ENCODE measurements at regions of chr12 and their contacts with region 1.

Region 1: DNA sequence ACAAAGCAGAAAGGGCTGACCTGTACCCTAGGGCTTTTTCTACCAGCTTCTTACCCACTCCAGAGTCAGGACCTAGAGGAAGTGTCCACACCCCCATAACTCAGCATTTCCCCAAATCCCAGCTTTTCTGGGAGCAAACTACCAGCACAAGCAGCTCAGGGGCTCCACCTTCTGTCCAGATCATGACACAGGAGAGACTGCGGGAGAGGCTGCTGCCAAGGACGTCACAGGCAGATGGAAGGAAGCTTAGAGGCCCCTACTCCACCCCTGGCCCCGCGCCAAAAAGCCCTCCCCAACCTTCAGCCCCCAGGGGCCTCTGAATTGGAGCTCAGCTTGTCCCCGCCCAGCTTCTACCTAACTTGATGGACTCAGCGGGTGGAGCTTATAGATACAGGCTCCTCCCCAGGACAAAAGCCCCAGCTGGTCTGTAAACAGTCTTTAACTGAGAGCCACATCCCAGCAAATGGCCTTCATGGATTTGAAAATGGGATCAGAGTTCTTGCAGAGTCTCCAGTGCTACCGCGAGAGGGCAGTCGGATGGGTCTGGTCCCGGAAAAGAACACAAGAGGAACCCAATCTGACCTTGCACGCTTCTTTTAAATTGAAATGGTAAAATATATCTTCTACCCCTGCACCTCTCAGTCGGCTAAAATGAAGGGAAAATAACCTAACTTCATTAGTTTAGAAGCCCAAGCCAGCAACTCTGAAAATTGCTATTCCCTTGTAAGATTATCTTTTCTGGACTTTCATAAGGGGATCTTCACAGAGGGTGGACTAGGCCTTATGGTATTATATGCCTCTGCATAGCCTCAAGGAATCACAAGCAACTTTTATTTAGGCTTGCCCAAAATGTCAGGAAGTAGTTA is 6.8 kb upstream of the BAZ2A start:
- DNase-seq: peak; percentile 97
- H3K4me3 Mint-ChIP-seq: peak overlapping the region; percentile 86
- H3K27ac Mint-ChIP-seq: peak overlapping the region; percentile 91
- H3K4me1 Mint-ChIP-seq: peaks cover 62% of the 10 kb centered on the region
- H3K27me3 Mint-ChIP-seq: no peaks in the 10 kb centered on the region

Region 2: GRCh38 chr12:56391721-56392120 is 245.2 kb before region 1 on chr12:
- CTCF ChIA-PET with region 1: no interaction called
- intact Hi-C with region 1: no loop called
- DNase-seq: no peak
- H3K4me3 Mint-ChIP-seq: no peak overlapping the region
- H3K27ac Mint-ChIP-seq: no peak overlapping the region
- H3K4me1 Mint-ChIP-seq: no peaks in the 10 kb centered on the region
- H3K27me3 Mint-ChIP-seq: no peaks in the 10 kb centered on the region

Region 3: DNA sequence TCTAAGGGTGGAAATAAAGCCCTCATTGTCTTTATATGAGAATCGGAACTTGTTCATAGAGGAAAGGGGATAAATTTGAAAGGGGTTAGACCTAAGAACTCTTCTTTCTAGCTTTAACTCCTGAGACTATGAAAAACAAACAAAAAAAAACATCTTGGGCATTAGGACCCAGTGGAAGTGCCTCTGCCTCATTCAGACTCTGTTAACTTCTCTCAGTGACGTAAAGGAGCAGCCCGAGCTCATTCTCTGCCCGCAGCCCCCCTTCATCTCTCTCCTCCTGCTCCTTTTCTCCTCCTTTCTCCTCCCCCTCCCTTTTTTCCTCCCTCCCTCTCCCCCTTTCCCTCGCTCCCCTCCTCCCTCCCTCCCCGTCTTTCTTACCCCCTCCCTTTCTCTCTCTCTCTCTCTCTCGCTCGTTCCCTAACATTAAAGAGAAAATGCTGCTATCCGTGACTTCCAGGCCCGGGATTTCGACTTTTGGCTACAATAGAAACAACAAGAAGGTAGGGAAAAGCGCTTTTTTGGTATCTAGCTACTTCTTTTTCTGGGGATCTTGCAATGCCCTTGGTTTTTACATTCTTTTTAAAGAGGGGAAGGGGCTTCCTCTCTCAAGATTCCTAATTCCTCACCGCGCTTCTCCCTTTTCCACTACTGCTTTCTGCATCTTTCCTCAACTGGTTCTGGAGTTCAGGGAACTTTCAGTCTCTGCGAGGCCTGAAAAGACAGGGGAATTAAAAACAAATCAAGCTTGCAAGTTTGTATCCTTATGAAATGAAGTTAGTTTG is 115.1 kb before region 1 on chr12 and contains the start of gene RBMS2:
- CTCF ChIA-PET with region 1: interaction called, 4 read pairs
- intact Hi-C with region 1: loop called (anchors 2 kb)
- DNase-seq: peak; percentile 56
- H3K4me3 Mint-ChIP-seq: peak within 1 kb of the TSS; percentile 62
- H3K27ac Mint-ChIP-seq: no peak within 1 kb of the TSS
- H3K4me1 Mint-ChIP-seq: peaks cover 28% of the 10 kb centered on the region
- H3K27me3 Mint-ChIP-seq: no peaks in the 10 kb centered on the region
- total RNA-seq, gene RBMS2: 2.5 to 5.1 TPM

Region 4: DNA sequence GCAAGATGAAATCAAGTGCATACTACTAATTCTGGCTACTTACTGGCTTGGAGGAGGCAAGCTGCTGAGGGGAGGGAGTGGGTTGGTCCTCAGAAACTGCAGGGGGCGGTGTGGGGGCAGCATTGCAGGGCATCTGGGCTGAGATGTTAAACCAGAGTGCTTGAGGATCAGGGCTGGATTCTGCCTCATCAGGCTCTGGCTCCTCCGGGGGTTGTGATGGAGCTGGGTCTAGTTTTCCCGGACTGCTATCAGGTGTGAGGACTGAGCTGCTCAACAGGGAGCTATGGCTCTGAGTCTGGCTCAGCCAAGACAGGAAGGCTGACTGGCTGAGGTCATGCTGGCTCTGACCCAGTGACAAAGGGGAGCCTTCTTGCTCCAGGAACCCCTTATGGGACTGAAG is 35.4 kb before region 1 on chr12:
- CTCF ChIA-PET with region 1: interaction called, 21 read pairs
- intact Hi-C with region 1: loop called (anchors 1 kb)
- DNase-seq: peak; percentile 62
- H3K4me3 Mint-ChIP-seq: no peak overlapping the region
- H3K27ac Mint-ChIP-seq: no peak overlapping the region
- H3K4me1 Mint-ChIP-seq: no peaks in the 10 kb centered on the region
- H3K27me3 Mint-ChIP-seq: no peaks in the 10 kb centered on the region

Region 5: GRCh38 chr12:56622535-56622934 is 14.4 kb before region 1 on chr12:
- CTCF ChIA-PET with region 1: interaction called, 27 read pairs
- intact Hi-C with region 1: no loop called
- DNase-seq: peak; percentile 27
- H3K4me3 Mint-ChIP-seq: no peak overlapping the region
- H3K27ac Mint-ChIP-seq: no peak overlapping the region
- H3K4me1 Mint-ChIP-seq: peaks cover 55% of the 10 kb centered on the region
- H3K27me3 Mint-ChIP-seq: no peaks in the 10 kb centered on the region

Region 6: DNA sequence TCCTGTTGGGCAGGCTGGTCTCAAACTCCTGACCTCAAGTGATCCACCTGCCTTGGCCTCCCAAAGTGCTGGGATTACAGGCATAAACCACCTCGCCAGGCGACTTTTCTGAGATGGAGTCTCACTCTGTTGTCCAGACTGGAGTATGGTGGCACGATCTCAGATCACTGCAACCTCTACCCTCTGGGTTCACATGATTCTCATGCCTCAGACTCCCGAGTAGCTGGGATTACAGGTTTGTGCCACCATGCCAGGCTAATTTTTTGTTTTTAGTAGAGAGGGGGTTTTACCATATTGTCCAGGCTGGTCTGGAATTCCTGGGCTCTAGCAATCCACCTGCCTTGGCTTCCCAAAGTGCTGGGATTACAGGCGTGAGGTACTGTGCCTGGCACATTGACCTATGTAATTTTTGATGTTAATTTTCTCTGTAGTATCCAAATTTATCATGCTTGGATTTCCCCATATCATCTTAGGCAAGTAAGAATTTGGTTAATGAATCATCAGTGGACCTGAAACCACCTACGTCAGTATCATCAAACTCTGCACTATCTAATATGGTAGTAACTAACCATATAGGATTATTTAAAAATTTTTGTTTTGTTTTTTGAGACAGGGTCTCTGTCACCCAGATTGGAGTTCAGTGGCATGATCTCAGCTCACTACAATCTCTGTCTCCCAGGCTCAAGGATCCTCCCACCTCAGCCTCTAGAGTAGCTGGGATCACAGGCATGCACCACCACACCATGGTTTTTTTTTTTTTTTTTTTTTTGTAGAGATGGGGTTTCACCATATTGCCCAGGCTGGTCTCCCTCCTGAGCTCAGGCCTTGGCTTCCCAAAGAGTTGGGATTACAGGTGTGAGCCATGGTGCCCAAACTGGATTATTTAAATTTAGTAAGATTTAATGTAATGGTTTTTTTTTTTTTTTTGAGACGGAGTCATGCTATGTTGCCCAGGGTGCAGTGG is 20.8 kb after region 1 on chr12:
- CTCF ChIA-PET with region 1: interaction called, 4 read pairs
- intact Hi-C with region 1: loop called (anchors 1 kb)
- DNase-seq: no peak
- H3K4me3 Mint-ChIP-seq: no peak overlapping the region
- H3K27ac Mint-ChIP-seq: peak overlapping the region; percentile 73
- H3K4me1 Mint-ChIP-seq: peaks cover 18% of the 10 kb centered on the region
- H3K27me3 Mint-ChIP-seq: no peaks in the 10 kb centered on the region

Region 7: DNA sequence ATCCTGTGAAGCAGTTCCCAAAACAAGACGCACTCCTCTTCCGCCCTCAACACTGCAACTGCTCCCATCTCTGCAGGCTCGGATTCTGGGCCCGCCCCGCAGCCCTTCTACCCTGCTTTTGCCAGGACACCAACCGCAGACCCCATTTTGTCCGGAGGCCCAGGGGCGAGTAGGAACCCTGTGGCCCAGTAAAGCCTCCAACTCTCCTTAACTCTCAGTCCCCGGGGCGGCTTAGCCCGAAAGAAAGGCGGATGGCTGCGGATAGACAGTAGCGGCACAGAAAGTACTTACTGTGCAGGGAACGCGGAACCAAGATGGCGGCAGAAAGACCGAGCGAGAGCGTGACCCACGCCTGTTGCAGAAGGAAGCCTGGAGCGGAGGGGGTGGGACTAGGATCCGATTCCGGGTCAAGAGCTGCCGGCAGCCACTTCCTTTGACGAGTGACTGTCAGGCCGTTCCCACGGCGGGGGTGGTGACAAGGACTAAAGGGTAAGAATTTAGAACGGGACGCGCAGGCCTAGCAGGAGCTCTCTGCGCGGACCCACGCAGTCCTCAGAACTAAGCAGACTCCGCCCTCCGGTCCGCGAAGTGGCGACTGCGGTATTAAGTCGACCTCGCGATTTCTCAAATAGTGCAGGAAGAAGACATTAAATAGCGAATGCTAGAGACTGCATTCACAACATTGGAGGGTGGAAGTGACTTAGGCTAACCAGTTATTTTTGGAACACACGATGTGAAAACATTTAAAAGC is 88.2 kb after region 1 on chr12 and contains the start of gene NACA:
- CTCF ChIA-PET with region 1: interaction called, 5 read pairs
- intact Hi-C with region 1: loop called (anchors 1 kb)
- DNase-seq: peak; percentile 99
- H3K4me3 Mint-ChIP-seq: peak within 1 kb of the TSS; percentile 99
- H3K27ac Mint-ChIP-seq: peak within 1 kb of the TSS; percentile 99
- H3K4me1 Mint-ChIP-seq: peaks cover 46% of the 10 kb centered on the region
- H3K27me3 Mint-ChIP-seq: no peaks in the 10 kb centered on the region
- total RNA-seq, gene NACA: 1,279 to 1,321 TPM

Region 8: DNA sequence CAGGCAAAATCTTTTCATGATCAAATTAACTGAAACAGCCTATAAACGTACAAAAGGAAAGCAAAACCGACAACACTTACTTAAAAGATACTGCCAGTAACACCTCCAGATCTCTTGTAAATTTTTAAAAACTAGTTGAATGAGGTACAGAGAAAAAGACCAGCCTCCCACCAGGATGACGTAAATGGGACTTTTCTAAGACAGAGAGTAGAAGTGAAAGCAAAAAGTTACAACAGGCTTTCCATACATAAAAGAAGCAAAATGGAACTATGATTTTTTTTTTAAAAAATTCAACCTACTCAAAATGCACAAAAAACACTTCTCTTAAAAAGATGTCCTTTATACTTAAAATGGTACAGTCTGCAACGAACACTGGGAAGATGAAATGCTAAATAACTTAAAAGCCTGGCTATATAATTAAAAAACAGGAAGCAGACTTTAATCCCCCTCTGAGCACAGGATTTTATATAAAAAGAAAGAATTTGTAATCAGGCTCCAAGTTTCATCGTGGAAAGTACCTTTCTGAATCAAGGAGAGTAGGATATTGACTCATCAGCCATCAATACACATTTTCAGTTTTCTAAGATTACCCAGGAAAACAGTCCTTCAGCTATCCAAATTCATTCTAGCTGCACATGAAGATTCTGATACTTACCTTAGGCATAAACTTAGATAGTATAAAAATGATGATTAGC is 427.2 kb after region 1 on chr12:
- CTCF ChIA-PET with region 1: no interaction called
- intact Hi-C with region 1: loop called (anchors 5 kb)
- DNase-seq: peak; percentile 81
- H3K4me3 Mint-ChIP-seq: peak overlapping the region; percentile 68
- H3K27ac Mint-ChIP-seq: peak overlapping the region; percentile 96
- H3K4me1 Mint-ChIP-seq: peaks cover 66% of the 10 kb centered on the region
- H3K27me3 Mint-ChIP-seq: no peaks in the 10 kb centered on the region